Posterior cingulate gyrus (tissue), 11 donors: ENCODE measurements at regions of chr17 and their contacts with region 1.

Region 1: GRCh38 chr17:42101513-42102319 is 3.4 kb upstream of the ZNF385C start:
- DNase-seq: peak; percentile 57 to 95 (median 82)

Region 2: GRCh38 chr17:42025191-42025579 is 76.5 kb before region 1 on chr17:
- intact Hi-C with region 1: loop called (anchors 1 kb)
- DNase-seq: peak in 1 of 10 donors; percentile 55

Region 3: GRCh38 chr17:42067351-42068091 is 34.2 kb before region 1 on chr17:
- intact Hi-C with region 1: loop called (anchors 1 kb)
- DNase-seq: peak in 9 of 10 donors; percentile 14 to 91 (median 69)